ENCODE measurements at regions of chrX and their contacts with region 1.

Region 1: DNA sequence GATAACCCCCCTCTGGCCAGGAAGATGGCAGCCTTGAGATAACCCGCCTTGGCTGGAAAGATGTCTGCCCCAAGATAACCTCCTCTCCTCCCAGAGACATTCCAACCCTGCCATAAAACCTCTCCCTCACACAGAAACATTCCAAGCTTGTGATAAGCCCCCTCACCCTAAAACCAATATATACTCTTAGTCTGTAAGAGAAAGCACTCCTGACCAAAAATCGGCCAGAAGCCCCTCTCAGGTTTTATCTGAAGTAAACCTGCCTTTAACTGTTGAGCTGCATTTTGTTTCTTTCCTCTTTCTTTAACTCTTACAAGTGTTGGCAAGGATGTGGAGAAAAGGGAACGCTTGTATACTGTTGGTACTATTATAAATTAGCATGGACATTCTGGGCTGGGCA is 8.5 kb downstream of the ERCC6L start:
- DNase-seq: no peak
- ATAC-seq: no peak
- H3K4me3 ChIP-seq: no peak overlapping the region
- H3K27ac ChIP-seq: no peak overlapping the region
- H3K4me1 ChIP-seq: no peaks in the 10 kb centered on the region
- H3K27me3 ChIP-seq: peaks cover 0 to 7% (median 3%) of the 10 kb centered on the region in 3 donors
- CTCF ChIP-seq: no peak
- POLR2A ChIP-seq: no peak

Region 2: GRCh38 chrX:72254816-72255215 is 24.5 kb after region 1 on chrX:
- in situ Hi-C with region 1: no loop called
- intact Hi-C with region 1: loop called (anchors 1 kb)
- DNase-seq: no peak
- ATAC-seq: no peak
- H3K4me3 ChIP-seq: no peak overlapping the region
- H3K27ac ChIP-seq: no peak overlapping the region
- H3K4me1 ChIP-seq: no peaks in the 10 kb centered on the region
- H3K27me3 ChIP-seq: peaks cover 0 to 3% (median 0%) of the 10 kb centered on the region in 3 donors
- CTCF ChIP-seq: no peak
- POLR2A ChIP-seq: no peak

Measured in gastrocnemius medialis (tissue), 4 donors.